ENCODE measurements at regions of chr1 and their contacts with region 1.

Region 1: GRCh38 chr1:82775402-82776000 is 974.8 kb downstream of the ADGRL2 start:
- DNase-seq: peak in 1 of 5 donors; percentile 8
- H3K4me3 ChIP-seq: no peak overlapping the region
- H3K4me3 Mint-ChIP-seq: no peak overlapping the region
- H3K27ac ChIP-seq: no peak overlapping the region
- H3K27ac Mint-ChIP-seq: no peak overlapping the region
- H3K4me1 ChIP-seq: no peaks in the 10 kb centered on the region
- H3K4me1 Mint-ChIP-seq: peaks cover 0 to 7% (median 1%) of the 10 kb centered on the region in 4 donors
- H3K27me3 ChIP-seq: no peaks in the 10 kb centered on the region
- H3K27me3 Mint-ChIP-seq: no peaks in the 10 kb centered on the region

Region 2: DNA sequence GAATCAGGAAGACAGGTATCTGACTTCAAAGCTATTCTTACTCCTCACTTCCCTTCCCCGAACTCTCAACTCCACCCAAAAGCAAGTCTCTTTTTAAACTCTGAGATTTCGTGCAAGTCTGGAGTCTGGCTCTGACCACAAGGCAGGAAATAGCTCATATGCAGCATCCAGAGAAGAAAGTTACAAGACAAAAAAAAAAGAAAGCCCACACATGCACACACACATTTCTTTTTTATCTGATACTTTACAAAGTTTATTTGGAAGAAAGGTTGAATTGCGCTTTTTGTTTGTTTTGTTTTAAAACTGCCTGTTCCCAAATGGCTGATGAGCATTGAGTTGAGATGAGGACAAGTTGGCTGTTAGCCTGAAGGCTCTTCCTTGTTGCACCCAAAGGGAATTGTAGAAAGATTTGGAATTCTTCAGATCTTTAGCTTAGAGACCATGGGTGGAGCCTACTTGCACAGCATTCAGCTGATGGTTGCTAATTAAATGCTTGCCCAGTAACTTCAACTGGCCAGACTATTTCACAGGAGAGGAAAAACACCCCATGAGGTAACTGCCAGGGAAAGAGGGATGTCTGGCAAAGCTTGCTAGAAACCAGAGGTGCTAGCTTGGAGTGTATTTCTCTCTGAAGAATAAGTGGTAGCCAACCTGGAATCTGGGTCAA is 733.1 kb after region 1 on chr1:
- CTCF ChIA-PET with region 1: no interaction called
- POLR2A ChIA-PET with region 1: no interaction called
- intact Hi-C with region 1: loop called (anchors 5 kb)
- DNase-seq: peak; percentile 66 to 79 (median 68)
- H3K4me3 ChIP-seq: peak overlapping the region in 1 of 2 donors; percentile 12
- H3K4me3 Mint-ChIP-seq: peak overlapping the region; percentile 55 to 79 (median 72)
- H3K27ac ChIP-seq: peak overlapping the region; percentile 14
- H3K27ac Mint-ChIP-seq: peak overlapping the region; percentile 81 to 93 (median 88)
- H3K4me1 ChIP-seq: peaks cover 29% of the 10 kb centered on the region
- H3K4me1 Mint-ChIP-seq: peaks cover 27 to 41% (median 30%) of the 10 kb centered on the region in 4 donors
- H3K27me3 ChIP-seq: no peaks in the 10 kb centered on the region
- H3K27me3 Mint-ChIP-seq: no peaks in the 10 kb centered on the region

Region 3: DNA sequence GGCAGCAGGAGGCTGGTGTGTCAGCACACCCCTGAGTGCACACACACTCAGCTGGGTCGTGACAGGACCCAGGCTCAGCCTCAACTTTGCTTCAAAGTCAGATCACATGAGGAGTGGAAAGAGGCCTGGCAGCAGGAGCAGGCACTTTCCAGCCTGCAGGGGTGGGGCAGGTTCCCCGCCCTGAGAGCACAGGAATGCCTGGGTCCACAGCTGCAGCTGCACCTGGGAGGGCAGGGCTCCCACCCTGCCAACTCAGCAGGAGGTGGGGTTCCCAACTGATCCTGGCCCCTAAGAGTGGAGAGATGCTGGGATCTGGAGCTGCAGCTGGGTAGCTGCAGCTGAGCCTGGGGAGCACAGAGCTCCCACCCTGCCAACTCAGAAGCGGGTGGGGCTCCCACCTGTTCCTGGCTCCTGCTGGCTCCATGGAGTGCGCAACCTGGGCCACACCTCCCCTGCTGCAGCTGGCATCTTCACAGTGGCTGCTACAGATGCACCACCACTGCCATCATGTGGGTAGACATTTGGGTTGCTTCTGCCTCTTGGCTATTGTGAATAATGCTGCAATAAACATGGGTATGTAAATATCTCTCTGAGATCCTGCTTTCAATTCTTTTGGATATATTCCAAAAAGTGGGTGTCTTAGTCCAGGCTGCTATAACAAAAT is 808.0 kb after region 1 on chr1:
- CTCF ChIA-PET with region 1: no interaction called
- POLR2A ChIA-PET with region 1: no interaction called
- intact Hi-C with region 1: loop called (anchors 5 kb)
- DNase-seq: peak in 4 of 5 donors; percentile 5 to 32 (median 12)
- H3K4me3 ChIP-seq: no peak overlapping the region
- H3K4me3 Mint-ChIP-seq: peak overlapping the region in 1 of 8 donors; percentile 51
- H3K27ac ChIP-seq: no peak overlapping the region
- H3K27ac Mint-ChIP-seq: no peak overlapping the region
- H3K4me1 ChIP-seq: no peaks in the 10 kb centered on the region
- H3K4me1 Mint-ChIP-seq: peaks cover 0 to 11% (median 3%) of the 10 kb centered on the region in 4 donors
- H3K27me3 ChIP-seq: no peaks in the 10 kb centered on the region
- H3K27me3 Mint-ChIP-seq: peaks cover 0 to 1% of the 10 kb centered on the region in 2 donors

Region 4: GRCh38 chr1:83860490-83861221 is 1085.2 kb after region 1 on chr1:
- CTCF ChIA-PET with region 1: no interaction called
- POLR2A ChIA-PET with region 1: no interaction called
- intact Hi-C with region 1: loop called (anchors 10 kb)
- DNase-seq: peak; percentile 63 to 69 (median 69)
- H3K4me3 ChIP-seq: peak overlapping the region; percentile 13 to 61
- H3K4me3 Mint-ChIP-seq: peak overlapping the region; percentile 79 to 93 (median 86)
- H3K27ac ChIP-seq: peak overlapping the region; percentile 64
- H3K27ac Mint-ChIP-seq: peak overlapping the region; percentile 14 to 90 (median 87)
- H3K4me1 ChIP-seq: peaks cover 6% of the 10 kb centered on the region
- H3K4me1 Mint-ChIP-seq: peaks cover 7 to 14% (median 12%) of the 10 kb centered on the region in 4 donors
- H3K27me3 ChIP-seq: no peaks in the 10 kb centered on the region
- H3K27me3 Mint-ChIP-seq: no peaks in the 10 kb centered on the region

Region 5: GRCh38 chr1:84122780-84123382 is 1347.4 kb after region 1 on chr1:
- CTCF ChIA-PET with region 1: no interaction called
- POLR2A ChIA-PET with region 1: no interaction called
- intact Hi-C with region 1: loop called (anchors 10 kb)
- DNase-seq: peak; percentile 33 to 47 (median 42)
- H3K4me3 ChIP-seq: no peak overlapping the region
- H3K4me3 Mint-ChIP-seq: no peak overlapping the region
- H3K27ac ChIP-seq: no peak overlapping the region
- H3K27ac Mint-ChIP-seq: no peak overlapping the region
- H3K4me1 ChIP-seq: no peaks in the 10 kb centered on the region
- H3K4me1 Mint-ChIP-seq: no peaks in the 10 kb centered on the region
- H3K27me3 ChIP-seq: no peaks in the 10 kb centered on the region
- H3K27me3 Mint-ChIP-seq: no peaks in the 10 kb centered on the region